ENCODE measurements at regions of chr22 and their contacts with region 1.

Region 1: GRCh38 chr22:20020533-20021195 is at the start of gene TANGO2:
- DNase-seq: peak; percentile 56
- H3K4me3 ChIP-seq: peak within 1 kb of the TSS; percentile 93
- CTCF ChIP-seq: no peak

Region 2: DNA sequence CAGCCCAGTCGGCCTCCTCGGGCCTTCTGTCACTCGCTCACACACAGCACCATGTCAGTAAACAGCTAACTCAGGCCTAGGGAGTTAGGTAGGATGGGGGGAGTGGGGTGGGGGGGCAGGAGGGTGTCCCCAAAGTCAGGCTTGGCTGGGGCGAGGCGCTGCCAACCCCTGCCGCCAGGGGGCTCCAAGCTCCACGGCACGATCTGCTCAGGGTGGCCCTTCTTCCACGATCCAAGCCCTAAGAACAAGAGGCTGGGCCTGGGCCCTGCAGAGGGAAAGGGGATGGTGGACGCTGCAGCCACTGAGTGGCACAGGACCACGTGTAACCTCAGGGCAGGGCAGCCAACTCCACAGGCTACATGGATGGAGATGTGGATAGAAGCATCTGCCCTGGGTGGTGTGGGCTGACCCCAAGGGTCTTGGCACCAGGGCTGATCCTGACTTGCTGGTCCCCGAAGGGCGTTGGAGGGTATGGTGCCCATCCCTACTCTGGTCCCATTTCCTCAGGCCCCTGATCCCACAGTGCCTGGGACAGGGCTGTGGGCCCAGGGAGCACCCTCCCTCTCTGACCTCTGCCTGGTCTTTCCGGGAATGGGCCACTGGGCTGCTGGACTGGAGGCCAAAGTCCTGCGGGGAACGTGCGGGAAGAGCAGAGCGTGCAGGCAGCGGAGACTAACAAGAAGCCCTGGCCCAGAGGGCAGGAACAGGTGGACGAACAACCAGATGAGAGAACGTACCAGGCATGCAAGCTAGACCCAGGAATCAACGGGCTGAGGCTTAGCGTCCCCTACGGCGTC is 50.0 kb before region 1 on chr22:
- in situ Hi-C with region 1: loop called (anchors 5 kb)
- DNase-seq: no peak
- H3K4me3 ChIP-seq: no peak overlapping the region
- CTCF ChIP-seq: peak; percentile 78

Region 3: GRCh38 chr22:20243537-20244249 is 223.0 kb after region 1 on chr22:
- in situ Hi-C with region 1: no loop called
- DNase-seq: peak; percentile 22
- H3K4me3 ChIP-seq: no peak overlapping the region
- CTCF ChIP-seq: no peak